ENCODE measurements at regions of chr9 and their contacts with region 1.

Region 1: DNA sequence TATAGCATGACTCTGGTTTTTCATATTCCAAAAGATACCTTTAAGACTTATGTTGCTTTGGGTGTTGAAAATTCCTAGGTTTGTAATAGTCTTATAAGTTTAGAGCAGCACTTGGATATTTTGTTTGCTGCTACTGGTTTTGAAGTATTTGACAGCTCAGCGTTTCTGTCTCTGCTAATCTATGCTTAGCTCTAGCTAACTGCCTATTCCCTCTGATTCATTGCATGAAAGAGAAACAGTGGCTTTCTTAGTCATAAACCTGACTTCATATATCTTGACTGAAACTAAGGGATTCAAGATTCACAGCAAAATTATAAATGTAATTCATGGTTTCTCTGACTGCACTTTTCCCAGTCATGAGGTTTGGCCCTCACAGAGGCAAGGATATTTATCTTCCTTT is 35.6 kb upstream of the ANXA1 start:
- DNase-seq: peak; percentile 40
- ATAC-seq: peak; percentile 98
- H3K4me3 Mint-ChIP-seq: peak overlapping the region; percentile 12
- H3K27ac Mint-ChIP-seq: no peak overlapping the region
- H3K4me1 Mint-ChIP-seq: peaks cover 46% of the 10 kb centered on the region
- H3K27me3 Mint-ChIP-seq: no peaks in the 10 kb centered on the region

Region 2: DNA sequence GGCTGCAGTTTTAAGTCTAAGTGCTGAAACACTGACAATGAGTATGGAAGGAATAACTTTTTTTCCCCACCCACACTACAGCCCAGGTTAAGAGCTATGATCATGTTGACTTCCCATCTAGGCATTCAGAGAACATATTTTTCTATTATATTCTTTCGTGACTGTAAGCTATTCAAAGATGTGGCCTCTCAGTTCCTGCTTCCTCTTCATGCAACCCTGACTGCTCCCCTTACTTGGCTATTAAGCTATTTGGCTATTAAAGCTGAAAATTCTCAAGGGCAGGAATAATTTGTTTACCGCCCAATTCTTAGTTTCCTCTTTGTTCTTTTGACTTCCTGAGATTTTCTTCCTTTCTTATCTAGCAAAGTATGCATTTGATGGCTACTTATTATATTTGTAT is 144.6 kb before region 1 on chr9:
- CTCF ChIA-PET with region 1: no interaction called
- POLR2A ChIA-PET with region 1: no interaction called
- intact Hi-C with region 1: no loop called
- DNase-seq: no peak
- ATAC-seq: no peak
- H3K4me3 Mint-ChIP-seq: no peak overlapping the region
- H3K27ac Mint-ChIP-seq: no peak overlapping the region
- H3K4me1 Mint-ChIP-seq: no peaks in the 10 kb centered on the region
- H3K27me3 Mint-ChIP-seq: peaks cover 8% of the 10 kb centered on the region

Region 3: DNA sequence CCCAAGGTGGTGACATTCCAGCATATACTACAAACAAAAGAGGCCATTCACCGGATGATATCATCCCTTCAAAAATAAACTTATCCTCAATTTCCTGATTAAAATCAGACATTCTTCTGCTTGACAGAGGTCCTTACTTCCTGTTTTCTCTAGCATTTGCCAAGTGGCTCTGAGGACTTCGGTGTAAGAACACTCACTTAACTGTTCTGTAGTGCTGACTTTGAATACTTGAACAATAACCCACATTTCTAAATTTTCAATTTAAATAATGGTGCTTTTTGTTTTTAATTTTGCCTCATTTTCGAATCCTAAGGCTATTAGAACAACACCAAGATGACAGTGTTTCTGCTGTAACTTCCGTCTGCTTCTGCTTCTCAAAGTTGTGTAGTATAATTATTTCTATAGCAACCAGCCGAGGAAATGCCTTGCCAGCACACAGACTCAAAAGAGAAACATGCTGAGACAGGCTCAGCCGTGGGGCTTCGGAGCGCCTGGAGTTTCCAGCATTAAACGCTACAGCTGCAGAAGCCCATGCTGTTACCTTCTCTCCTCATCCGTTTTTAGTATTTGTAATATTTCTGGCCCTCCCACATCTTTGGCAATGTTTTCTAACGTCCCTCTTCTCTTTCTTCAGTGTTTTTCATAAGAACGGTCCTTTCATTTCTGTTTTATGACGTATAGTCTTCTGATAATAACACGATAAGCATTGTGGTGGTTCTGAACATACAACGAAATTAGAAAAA is 16.2 kb after region 1 on chr9:
- CTCF ChIA-PET with region 1: interaction called, 4 read pairs
- POLR2A ChIA-PET with region 1: interaction called, 4 read pairs
- intact Hi-C with region 1: loop called (anchors 1 kb)
- DNase-seq: peak; percentile 81
- ATAC-seq: peak; percentile 90
- H3K4me3 Mint-ChIP-seq: peak overlapping the region; percentile 72
- H3K27ac Mint-ChIP-seq: peak overlapping the region; percentile 86
- H3K4me1 Mint-ChIP-seq: peaks cover 37% of the 10 kb centered on the region
- H3K27me3 Mint-ChIP-seq: no peaks in the 10 kb centered on the region

Region 4: GRCh38 chr9:73149371-73150067 is 33.5 kb after region 1 on chr9:
- CTCF ChIA-PET with region 1: interaction called, 7 read pairs
- POLR2A ChIA-PET with region 1: interaction called, 3 read pairs
- intact Hi-C with region 1: loop called (anchors 1 kb)
- DNase-seq: no peak
- ATAC-seq: peak; percentile 65
- H3K4me3 Mint-ChIP-seq: peak overlapping the region; percentile 64
- H3K27ac Mint-ChIP-seq: peak overlapping the region; percentile 81
- H3K4me1 Mint-ChIP-seq: peaks cover 61% of the 10 kb centered on the region
- H3K27me3 Mint-ChIP-seq: no peaks in the 10 kb centered on the region

Region 5: DNA sequence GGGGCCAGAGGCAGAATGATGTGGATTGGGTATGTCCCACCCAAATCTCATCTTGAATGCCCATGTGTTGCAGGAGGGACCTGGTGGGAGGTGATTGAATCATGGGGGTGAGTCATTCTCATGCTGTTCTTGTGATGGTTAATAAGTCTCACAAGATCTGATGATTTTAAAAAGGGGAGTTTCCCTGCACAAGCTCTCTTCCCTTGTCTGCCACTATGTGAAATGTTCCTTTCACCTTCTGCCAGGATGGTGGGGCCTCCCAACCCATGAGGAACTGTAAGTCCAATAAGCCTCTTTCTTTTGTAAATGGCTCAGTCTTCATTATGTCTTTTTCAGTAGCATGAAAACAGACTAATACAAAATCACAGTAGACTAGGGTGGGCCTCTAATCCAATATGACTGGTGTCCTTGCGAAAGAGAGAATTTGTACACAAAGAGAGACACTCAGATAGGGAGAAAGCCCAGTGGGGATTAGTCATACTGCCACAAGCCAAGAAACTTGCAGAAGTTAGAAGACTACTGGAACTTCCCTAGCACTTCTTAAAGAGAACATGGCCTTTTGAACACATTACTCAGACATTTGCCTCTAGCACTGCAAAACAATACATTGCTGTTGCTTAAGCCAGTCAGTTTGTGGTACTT is 104.1 kb after region 1 on chr9:
- CTCF ChIA-PET with region 1: no interaction called
- POLR2A ChIA-PET with region 1: no interaction called
- intact Hi-C with region 1: loop called (anchors 1 kb)
- DNase-seq: peak; percentile 65
- ATAC-seq: peak; percentile 93
- H3K4me3 Mint-ChIP-seq: no peak overlapping the region
- H3K27ac Mint-ChIP-seq: peak overlapping the region; percentile 74
- H3K4me1 Mint-ChIP-seq: peaks cover 31% of the 10 kb centered on the region
- H3K27me3 Mint-ChIP-seq: peaks cover 43% of the 10 kb centered on the region